Colonic mucosa (tissue), 4 donors: ENCODE measurements at regions of chr3 and their contacts with region 1.

Region 1: DNA sequence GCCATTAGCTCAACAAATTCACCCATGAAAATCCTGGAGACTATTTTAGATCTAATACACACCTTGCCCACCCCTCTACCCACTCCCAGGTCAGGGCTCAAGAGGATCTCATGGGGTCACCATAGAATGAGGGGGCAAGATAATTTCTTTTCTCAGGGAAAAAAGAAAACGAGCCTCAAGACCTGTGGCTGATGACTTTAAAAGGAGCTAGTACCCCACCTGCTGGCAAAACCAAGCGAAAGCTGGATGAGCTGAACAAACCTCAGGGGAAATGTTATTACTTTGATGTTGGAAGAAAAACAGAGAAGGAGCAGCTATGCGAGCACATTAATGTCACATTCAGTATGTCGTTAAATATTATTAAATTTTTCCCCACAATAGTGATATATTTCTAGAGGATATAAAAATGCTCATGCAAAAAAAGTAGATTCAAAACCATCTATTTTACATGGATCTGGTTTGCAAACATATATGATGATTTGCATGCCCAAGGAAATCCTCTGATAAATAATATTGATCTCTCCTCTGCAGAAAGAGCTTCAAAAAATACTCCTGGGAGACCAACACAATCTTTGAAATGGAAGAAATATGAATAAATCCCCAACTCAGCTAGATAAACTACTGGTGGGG is 37.7 kb downstream of the PLD1 start:
- DNase-seq: peak; percentile 78
- H3K4me3 ChIP-seq: no peak overlapping the region
- H3K27ac ChIP-seq: no peak overlapping the region
- H3K4me1 ChIP-seq: no peaks in the 10 kb centered on the region
- H3K27me3 ChIP-seq: no peaks in the 10 kb centered on the region
- CTCF ChIP-seq: peak; percentile 56

Region 2: GRCh38 chr3:171743327-171744157 is 29.0 kb before region 1 on chr3:
- intact Hi-C with region 1: no loop called
- DNase-seq: no peak
- H3K4me3 ChIP-seq: no peak overlapping the region
- H3K27ac ChIP-seq: no peak overlapping the region
- H3K4me1 ChIP-seq: peaks cover 7% of the 10 kb centered on the region
- H3K27me3 ChIP-seq: no peaks in the 10 kb centered on the region
- CTCF ChIP-seq: no peak

Region 3: GRCh38 chr3:171829841-171830517 is 57.4 kb after region 1 on chr3:
- intact Hi-C with region 1: loop called (anchors 5 kb)
- DNase-seq: peak; percentile 82
- H3K4me3 ChIP-seq: no peak overlapping the region
- H3K27ac ChIP-seq: peak overlapping the region; percentile 5
- H3K4me1 ChIP-seq: no peaks in the 10 kb centered on the region
- H3K27me3 ChIP-seq: no peaks in the 10 kb centered on the region
- CTCF ChIP-seq: peak; percentile 77